ENCODE measurements at regions of chr20 and their contacts with region 1.

Region 1: DNA sequence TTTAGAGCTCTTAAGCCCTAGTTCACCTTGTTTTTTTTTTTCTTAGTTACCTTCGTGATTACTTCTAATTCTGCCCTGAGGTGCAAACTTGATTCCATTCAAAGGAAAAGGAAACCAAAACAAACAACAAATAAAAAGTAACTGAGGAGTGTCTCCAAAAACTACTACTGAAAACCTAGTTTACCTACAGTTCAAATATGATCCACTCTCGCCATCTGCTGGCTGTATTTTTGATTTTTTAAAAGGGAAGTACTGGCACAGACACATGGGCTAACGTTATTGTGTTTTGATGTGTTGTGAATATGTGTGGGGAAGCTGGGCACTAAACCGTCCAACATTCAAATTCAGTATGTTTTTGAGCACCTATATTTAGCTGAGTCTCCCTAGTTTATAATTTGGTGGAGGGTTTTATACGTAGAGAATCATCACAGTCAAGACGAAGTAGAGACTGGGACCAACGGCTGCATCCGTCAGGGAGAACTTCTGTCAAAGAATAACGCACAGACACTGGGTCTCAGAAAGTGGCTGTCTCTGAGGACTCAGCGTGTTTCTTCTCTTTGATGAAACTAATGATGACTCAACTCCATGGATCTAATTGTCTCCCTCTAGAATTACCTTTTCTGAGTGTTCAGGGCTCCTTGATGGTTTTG is 373.5 kb upstream of the BTBD3 start:
- DNase-seq: peak in 1 of 2 donors; percentile 62
- ATAC-seq: peak in 5 of 8 donors; percentile 48 to 75 (median 74)
- H3K4me3 ChIP-seq: peak overlapping the region in 2 of 10 donors; percentile 5 to 10
- H3K27ac ChIP-seq: no peak overlapping the region
- H3K4me1 ChIP-seq: peaks cover 0 to 12% (median 0%) of the 10 kb centered on the region in 9 donors
- H3K27me3 ChIP-seq: peaks cover 0 to 3% (median 0%) of the 10 kb centered on the region in 7 donors
- CTCF ChIP-seq: peak in 8 of 9 donors; percentile 21 to 79 (median 66)

Region 2: GRCh38 chr20:9609887-9610502 is 1934.2 kb before region 1 on chr20:
- intact Hi-C with region 1: loop called in 6 of 10 experiments (anchors 5 to 10 kb)
- DNase-seq: peak in 1 of 2 donors; percentile 55
- ATAC-seq: no peak
- H3K4me3 ChIP-seq: no peak overlapping the region
- H3K27ac ChIP-seq: no peak overlapping the region
- H3K4me1 ChIP-seq: no peaks in the 10 kb centered on the region
- H3K27me3 ChIP-seq: peaks cover 0 to 26% (median 0%) of the 10 kb centered on the region in 7 donors
- CTCF ChIP-seq: peak; percentile 24 to 82 (median 74)

Region 3: DNA sequence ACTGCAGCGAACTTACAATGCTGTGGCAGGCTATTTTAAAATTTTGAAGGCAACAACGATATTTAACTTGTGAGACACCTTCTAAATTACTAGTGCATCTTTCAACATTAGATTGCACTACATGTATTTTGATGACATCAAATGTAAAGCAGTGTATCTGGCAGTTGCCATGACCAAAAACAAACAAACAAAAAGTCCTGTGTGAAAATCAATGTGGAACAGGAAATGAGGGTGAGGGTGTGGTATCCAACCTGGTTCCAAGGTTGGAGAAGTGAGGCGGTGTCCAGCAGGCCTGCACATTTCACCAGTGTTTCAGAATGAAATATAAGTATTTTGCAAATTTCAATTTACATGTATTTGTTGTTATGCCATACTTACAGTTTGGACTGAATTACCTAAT is 1917.8 kb before region 1 on chr20:
- intact Hi-C with region 1: loop called in 1 of 10 experiments (anchors 10 kb)
- DNase-seq: no peak
- ATAC-seq: no peak
- H3K4me3 ChIP-seq: no peak overlapping the region
- H3K27ac ChIP-seq: no peak overlapping the region
- H3K4me1 ChIP-seq: no peaks in the 10 kb centered on the region
- H3K27me3 ChIP-seq: peaks cover 0 to 7% (median 5%) of the 10 kb centered on the region in 7 donors
- CTCF ChIP-seq: no peak

Region 4: DNA sequence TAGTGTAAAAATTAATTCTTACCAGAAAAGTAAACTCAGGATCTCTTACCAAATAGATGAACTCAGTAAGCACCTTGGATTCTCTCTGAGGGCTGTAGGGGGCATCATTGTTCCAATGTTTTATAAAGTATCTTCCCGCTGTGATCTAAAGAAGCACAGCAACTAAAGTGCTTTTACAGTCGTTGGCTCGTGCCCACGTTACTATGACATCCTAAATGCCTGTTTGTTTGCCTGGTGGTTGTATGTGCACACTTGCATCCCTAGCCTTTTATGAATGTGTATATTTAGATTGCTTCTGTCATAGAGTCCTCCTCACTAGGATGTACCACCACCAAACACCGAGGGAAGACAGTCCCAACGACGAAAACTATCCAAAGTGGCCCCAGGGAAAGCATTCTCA is 1074.6 kb before region 1 on chr20:
- intact Hi-C with region 1: loop called in 5 of 10 experiments (anchors 5 to 10 kb)
- DNase-seq: peak in 1 of 2 donors; percentile 61
- ATAC-seq: peak in 7 of 8 donors; percentile 44 to 81 (median 75)
- H3K4me3 ChIP-seq: no peak overlapping the region
- H3K27ac ChIP-seq: peak overlapping the region in 2 of 10 donors; percentile 3 to 29
- H3K4me1 ChIP-seq: peaks cover 0 to 60% (median 51%) of the 10 kb centered on the region in 9 donors
- H3K27me3 ChIP-seq: no peaks in the 10 kb centered on the region
- CTCF ChIP-seq: peak; percentile 38 to 80 (median 69)

Region 5: GRCh38 chr20:10553326-10553984 is 990.7 kb before region 1 on chr20:
- intact Hi-C with region 1: loop called in 9 of 10 experiments (anchors 2 to 10 kb)
- DNase-seq: peak; percentile 55 to 77
- ATAC-seq: peak in 7 of 8 donors; percentile 45 to 79 (median 73)
- H3K4me3 ChIP-seq: no peak overlapping the region
- H3K27ac ChIP-seq: no peak overlapping the region
- H3K4me1 ChIP-seq: peaks cover 0 to 38% (median 14%) of the 10 kb centered on the region in 9 donors
- H3K27me3 ChIP-seq: no peaks in the 10 kb centered on the region
- CTCF ChIP-seq: peak; percentile 65 to 90 (median 82)

Region 6: GRCh38 chr20:11274141-11274594 is 270.0 kb before region 1 on chr20:
- intact Hi-C with region 1: loop called in 1 of 10 experiments (anchors 5 kb)
- DNase-seq: peak in 1 of 2 donors; percentile 45
- ATAC-seq: peak; percentile 69 to 95 (median 92)
- H3K4me3 ChIP-seq: no peak overlapping the region
- H3K27ac ChIP-seq: no peak overlapping the region
- H3K4me1 ChIP-seq: peaks cover 0 to 9% (median 5%) of the 10 kb centered on the region in 9 donors
- H3K27me3 ChIP-seq: no peaks in the 10 kb centered on the region
- CTCF ChIP-seq: peak; percentile 51 to 86 (median 73)

Region 7: DNA sequence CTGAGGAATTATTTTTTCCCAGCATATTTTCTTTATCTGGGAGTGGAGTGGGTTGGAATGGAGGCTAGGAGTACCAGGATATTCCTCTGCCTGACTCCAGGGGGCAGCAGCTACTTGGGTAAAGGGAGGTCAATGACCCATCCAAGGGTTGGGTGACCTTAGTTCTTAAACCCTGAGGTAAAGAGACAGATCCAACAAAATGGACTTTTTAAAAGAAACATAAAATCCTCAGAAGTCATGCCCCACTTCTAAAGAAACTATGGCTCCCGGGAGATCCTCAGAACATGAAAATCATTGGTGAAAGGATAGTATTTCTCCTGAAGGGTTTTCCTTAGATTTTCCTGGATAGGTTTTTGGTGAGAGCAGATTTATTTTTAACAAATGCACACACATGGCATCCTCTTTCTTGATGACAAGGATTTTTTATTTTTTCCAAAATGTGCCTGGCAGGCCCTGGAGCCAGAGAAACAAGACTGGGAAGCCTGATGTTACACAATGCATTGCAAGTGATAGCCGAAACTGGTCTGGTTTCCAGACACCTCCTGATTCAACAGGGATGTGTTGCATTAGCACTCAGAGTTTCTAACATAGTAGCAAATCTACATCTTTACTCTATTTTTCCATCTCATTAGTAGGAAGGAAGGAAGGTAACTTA is 132.6 kb after region 1 on chr20:
- intact Hi-C with region 1: no loop called
- DNase-seq: peak; percentile 46 to 56
- ATAC-seq: peak in 7 of 8 donors; percentile 82 to 93 (median 87)
- H3K4me3 ChIP-seq: peak overlapping the region in 1 of 10 donors; percentile 23
- H3K27ac ChIP-seq: peak overlapping the region in 3 of 10 donors; percentile 11 to 41 (median 19)
- H3K4me1 ChIP-seq: peaks cover 0 to 19% (median 4%) of the 10 kb centered on the region in 9 donors
- H3K27me3 ChIP-seq: peaks cover 0 to 7% (median 0%) of the 10 kb centered on the region in 7 donors
- CTCF ChIP-seq: peak; percentile 62 to 92 (median 84)

Region 8: DNA sequence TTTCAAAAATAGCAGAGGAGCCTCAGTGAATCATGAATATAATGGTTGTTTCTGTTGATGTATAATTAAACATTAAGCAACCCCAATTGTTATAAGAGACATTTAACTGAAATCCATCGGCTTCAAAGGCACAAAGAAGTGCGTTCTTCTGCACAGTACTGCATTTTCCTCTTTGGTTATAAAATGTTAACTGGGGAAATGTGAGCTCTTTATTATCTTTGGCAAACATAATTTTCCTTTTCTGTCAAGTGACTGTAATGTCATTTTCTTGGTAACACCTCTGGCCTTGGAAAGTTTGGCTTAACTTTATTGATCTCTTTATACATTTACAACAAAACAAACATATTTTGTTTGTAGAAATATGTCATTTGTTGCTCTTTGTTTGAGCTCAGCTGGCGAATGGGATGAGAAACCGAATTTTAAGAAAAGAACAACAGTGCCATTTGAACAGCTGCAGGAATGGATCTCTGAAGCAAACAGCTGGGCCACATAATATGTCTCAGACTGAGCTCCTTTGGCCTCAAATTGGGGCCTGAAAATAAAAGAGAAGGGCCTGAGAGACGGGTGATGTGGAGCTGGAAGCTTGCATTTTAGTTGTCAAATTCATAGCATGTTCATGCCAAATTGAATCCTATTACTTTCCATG is 1037.6 kb after region 1 on chr20:
- intact Hi-C with region 1: no loop called
- DNase-seq: peak in 1 of 2 donors; percentile 22
- ATAC-seq: peak in 7 of 8 donors; percentile 76 to 93 (median 90)
- H3K4me3 ChIP-seq: no peak overlapping the region
- H3K27ac ChIP-seq: peak overlapping the region in 6 of 10 donors; percentile 25 to 66 (median 61)
- H3K4me1 ChIP-seq: peaks cover 0 to 10% (median 0%) of the 10 kb centered on the region in 9 donors
- H3K27me3 ChIP-seq: no peaks in the 10 kb centered on the region
- CTCF ChIP-seq: no peak

Measured in heart right ventricle (tissue), 16 donors.